Activated CD4-positive, alpha-beta T cell treated with anti-CD3 and anti-CD28 coated beads, Interleukin-2, amount 10 ng/mL, durations not matched to agents 7 days and 5 days (primary cell): ENCODE measurements at regions of chr1 and their contacts with region 1.

Region 1: DNA sequence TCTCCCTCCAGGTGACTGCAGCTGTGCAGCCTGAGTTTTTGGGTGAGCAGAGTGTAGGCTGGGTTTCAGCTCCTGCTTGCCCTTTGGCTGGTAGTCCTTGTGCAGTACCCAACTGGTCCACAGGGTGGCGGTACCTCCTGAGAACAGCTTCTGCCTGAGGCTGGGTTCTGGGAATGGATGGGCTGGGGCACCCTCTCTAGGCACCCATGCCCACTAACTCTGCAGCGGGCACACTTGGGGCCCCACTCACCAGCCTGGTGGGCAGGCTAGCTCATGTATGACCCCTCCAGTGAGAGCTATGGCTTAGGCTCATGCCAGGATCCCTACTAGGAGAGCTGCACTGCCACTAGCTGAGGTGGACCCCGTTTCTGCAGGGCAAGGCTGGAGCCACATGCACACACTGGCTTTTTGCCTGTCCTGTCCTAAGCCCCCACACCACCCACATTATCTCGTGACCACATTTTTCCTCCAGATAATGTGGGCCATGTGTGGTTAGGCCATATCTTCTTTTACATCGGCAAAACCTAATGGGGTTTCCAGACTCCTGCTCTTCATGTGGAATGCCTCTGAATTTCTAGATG is 15.5 kb upstream of the GSTM4 start:
- DNase-seq: peak; percentile 93
- H3K4me3 Mint-ChIP-seq: no peak overlapping the region
- H3K27ac Mint-ChIP-seq: no peak overlapping the region
- H3K4me1 Mint-ChIP-seq: peaks cover 21% of the 10 kb centered on the region
- H3K27me3 Mint-ChIP-seq: no peaks in the 10 kb centered on the region

Region 2: DNA sequence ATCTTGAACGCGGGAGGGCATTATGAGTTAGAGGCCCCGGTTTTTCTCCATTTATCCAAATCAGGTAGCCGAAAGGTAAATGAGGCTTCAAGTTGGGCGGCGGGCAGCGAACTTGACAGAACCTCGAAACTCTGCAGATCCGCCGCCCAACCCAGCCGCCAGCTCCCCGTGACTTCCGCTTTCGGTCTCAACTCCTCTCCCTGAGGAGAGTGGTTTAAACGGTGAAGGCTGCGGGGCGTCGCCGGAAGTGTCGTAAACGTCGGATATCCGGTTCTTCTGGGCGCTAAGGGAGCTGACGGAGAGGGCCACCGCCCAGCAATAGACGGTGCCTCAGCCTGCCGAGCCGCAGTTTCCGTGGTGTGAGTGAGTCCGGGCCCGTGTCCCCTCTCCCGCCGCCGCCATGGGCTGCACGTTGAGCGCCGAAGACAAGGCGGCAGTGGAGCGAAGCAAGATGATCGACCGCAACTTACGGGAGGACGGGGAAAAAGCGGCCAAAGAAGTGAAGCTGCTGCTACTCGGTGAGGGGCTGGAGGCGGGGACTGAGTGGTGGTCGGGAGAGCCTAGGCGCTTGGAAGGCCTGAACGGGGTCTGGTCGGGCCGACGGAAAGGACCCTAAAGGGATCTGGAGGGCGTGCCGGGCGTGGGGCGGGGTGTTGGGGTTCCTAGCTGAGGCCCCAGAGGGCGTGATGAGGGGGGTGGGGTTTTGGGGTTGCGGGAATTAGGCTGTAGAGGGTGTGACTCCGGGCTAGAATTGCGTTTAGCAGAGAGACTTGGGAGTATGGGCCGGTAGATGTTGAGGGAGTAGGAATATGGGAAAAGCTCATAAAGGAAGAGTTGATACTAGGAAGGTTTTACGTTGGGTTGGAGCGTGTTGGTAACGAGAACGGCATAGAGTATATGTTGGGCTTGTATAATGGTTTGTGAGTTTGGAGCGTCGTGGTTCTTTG is 91.8 kb before region 1 on chr1 and contains the start of gene GNAI3:
- CTCF ChIA-PET with region 1: interaction called, 30 read pairs
- POLR2A ChIA-PET with region 1: no interaction called
- DNase-seq: peak; percentile 98
- H3K4me3 Mint-ChIP-seq: peak within 1 kb of the TSS; percentile 96
- H3K27ac Mint-ChIP-seq: peak within 1 kb of the TSS; percentile 98
- H3K4me1 Mint-ChIP-seq: peaks cover 49% of the 10 kb centered on the region
- H3K27me3 Mint-ChIP-seq: no peaks in the 10 kb centered on the region
- total RNA-seq, gene GNAI3: 8.8 to 9.7 TPM

Region 3: DNA sequence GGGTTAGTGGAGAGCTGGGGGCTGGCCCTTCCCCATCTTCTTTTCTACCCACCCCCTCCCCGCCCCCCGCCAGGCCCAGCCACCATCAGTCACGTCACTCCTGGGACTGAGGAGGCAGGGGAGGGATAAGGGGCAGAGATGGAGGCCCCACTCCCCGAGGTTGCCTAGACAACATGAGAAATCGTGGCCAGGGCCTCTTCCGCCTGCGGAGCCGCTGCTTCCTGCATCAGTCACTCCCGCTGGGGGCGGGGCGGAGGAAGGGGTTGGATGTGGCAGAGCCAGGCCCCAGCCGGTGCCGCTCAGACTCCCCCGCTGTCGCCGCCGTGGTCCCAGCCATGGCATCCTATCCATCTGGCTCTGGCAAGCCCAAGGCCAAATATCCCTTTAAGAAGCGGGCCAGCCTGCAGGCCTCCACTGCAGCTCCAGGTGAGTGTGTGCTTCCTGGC is 19.5 kb before region 1 on chr1:
- CTCF ChIA-PET with region 1: interaction called, 67 read pairs
- POLR2A ChIA-PET with region 1: no interaction called
- DNase-seq: peak; percentile 99
- H3K4me3 Mint-ChIP-seq: peak overlapping the region; percentile 84
- H3K27ac Mint-ChIP-seq: peak overlapping the region; percentile 94
- H3K4me1 Mint-ChIP-seq: peaks cover 71% of the 10 kb centered on the region
- H3K27me3 Mint-ChIP-seq: no peaks in the 10 kb centered on the region

Region 4: GRCh38 chr1:109630081-109630897 is 10.1 kb before region 1 on chr1:
- CTCF ChIA-PET with region 1: interaction called, 67 read pairs
- POLR2A ChIA-PET with region 1: no interaction called
- DNase-seq: peak; percentile 41
- H3K4me3 Mint-ChIP-seq: no peak overlapping the region
- H3K27ac Mint-ChIP-seq: no peak overlapping the region
- H3K4me1 Mint-ChIP-seq: peaks cover 19% of the 10 kb centered on the region
- H3K27me3 Mint-ChIP-seq: no peaks in the 10 kb centered on the region

Region 5: DNA sequence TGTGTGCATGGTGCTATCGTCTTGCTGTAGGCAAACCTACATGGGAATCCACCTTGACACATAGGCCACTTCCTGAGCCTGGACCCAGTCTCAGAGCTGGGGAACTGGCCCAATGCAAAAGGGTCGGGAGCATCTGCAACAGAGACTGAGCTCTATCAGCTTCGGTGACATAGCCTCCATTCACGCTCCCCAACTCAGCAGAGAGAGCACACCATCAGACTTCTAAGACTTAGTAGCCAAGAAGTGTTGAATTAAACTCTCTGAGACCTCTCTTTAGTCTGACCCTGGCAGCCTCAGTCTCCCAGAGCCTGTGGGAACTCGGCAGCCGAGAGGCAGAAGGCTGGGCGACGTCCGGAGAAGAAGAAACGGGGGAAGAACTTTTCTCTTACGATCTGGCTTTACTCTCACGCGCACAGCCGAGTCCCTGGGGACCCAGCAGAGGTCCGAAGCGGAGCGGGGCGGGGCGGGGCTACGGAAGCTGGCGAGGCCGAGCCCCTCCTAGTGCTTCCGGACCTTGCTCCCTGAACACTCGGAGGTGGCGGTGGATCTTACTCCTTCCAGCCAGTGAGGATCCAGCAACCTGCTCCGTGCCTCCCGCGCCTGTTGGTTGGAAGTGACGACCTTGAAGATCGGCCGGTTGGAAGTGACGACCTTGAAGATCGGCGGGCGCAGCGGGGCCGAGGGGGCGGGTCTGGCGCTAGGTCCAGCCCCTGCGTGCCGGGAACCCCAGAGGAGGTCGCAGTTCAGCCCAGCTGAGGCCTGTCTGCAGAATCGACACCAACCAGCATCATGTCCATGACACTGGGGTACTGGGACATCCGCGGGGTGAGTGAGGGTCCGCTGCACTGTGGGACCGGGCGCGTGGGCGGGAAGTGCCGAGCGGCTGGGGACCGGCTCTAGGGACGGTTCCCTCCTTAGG is 15.5 kb after region 1 on chr1 and contains the start of gene GSTM4:
- CTCF ChIA-PET with region 1: interaction called, 52 read pairs
- POLR2A ChIA-PET with region 1: no interaction called
- DNase-seq: peak; percentile 76
- H3K4me3 Mint-ChIP-seq: peak within 1 kb of the TSS; percentile 82
- H3K27ac Mint-ChIP-seq: peak within 1 kb of the TSS; percentile 91
- H3K4me1 Mint-ChIP-seq: peaks cover 26% of the 10 kb centered on the region
- H3K27me3 Mint-ChIP-seq: peaks cover 21% of the 10 kb centered on the region
- total RNA-seq, gene GSTM4: 34.3 to 36.3 TPM

Region 6: DNA sequence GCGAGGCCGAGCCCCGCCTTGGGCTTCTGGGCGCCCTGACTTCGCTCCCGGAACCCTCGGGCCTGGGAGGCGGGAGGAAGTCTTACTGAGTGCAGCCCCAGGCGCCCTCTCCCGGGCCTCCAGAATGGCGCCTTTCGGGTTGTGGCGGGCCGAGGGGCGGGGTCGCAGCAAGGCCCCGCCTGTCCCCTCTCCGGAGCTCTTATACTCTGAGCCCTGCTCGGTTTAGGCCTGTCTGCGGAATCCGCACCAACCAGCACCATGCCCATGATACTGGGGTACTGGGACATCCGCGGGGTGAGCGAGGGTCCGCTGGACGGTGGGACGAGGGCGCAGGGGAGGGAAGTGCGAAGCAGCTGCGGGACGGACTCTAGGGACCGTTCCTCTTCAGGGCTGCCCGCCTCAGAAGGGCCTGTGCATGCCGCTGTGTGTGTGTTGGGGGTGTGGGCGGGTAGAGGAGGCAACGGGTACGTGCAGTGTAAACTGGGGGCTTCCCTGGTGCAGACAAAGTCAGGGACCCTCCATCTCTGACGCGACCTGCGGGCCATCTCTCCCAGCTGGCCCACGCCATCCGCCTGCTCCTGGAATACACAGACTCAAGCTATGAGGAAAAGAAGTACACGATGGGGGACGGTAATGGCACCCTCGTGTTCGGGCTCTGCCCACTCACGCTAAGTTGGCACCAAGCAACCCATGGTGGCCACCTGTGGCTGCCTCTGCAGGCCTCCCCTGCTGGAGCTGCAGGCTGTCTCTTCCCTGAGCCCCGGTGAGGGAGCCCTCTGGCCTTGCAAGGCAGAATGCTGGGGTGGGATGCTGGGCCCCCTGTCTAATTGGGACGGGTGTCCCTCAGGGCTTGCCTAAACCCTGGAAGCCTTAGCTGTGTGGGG is 47.5 kb after region 1 on chr1 and contains the start of gene GSTM1:
- CTCF ChIA-PET with region 1: no interaction called
- POLR2A ChIA-PET with region 1: no interaction called
- DNase-seq: peak; percentile 89
- H3K4me3 Mint-ChIP-seq: peak within 1 kb of the TSS; percentile 82
- H3K27ac Mint-ChIP-seq: peak within 1 kb of the TSS; percentile 91
- H3K4me1 Mint-ChIP-seq: peaks cover 22% of the 10 kb centered on the region
- H3K27me3 Mint-ChIP-seq: no peaks in the 10 kb centered on the region
- total RNA-seq, gene GSTM1: 68.4 to 77.2 TPM

Region 7: DNA sequence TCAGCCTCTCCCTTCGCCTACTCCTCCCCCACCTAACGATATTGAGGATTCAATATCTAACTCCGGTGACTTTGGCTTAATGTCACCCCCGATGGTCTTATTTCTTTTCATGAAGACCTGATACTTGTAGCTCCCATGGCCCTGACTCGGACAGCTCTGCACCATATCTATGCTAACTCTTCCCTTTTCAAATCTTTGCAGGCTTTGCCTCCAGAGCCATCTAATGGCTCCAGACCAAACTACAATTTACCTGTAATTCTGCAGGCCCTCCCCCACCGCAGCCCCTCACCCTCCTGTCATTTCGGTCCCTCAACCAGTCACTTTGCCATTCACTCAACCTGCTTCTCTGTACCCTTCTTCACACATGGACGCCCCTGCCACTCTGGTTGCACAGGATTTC is 63.8 kb after region 1 on chr1:
- CTCF ChIA-PET with region 1: no interaction called
- POLR2A ChIA-PET with region 1: no interaction called
- DNase-seq: no peak
- H3K4me3 Mint-ChIP-seq: no peak overlapping the region
- H3K27ac Mint-ChIP-seq: no peak overlapping the region
- H3K4me1 Mint-ChIP-seq: no peaks in the 10 kb centered on the region
- H3K27me3 Mint-ChIP-seq: no peaks in the 10 kb centered on the region

Region 8: DNA sequence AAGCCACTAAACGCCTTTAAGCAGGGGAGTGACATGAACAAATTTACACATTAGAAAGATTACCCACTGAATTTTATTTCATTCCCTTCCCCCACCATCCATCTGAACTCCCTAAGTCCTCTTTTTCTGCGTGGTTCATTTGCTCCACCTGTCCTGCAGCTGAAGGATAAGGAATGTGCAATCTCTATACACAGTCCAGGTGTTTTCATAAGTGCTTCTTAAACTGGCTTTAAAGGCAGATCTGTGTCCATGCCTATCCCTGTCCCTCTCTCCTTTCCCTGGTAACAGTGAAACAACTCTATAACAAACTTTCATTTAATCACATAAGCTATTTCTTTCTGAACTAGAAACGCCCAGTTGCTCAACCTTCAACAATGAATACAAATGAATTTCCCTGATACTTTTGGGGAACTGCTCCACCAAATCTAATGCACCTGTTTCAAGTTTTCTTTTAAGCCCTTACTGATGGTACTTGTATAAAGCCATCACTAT is 92.1 kb after region 1 on chr1:
- CTCF ChIA-PET with region 1: no interaction called
- POLR2A ChIA-PET with region 1: no interaction called
- DNase-seq: no peak
- H3K4me3 Mint-ChIP-seq: no peak overlapping the region
- H3K27ac Mint-ChIP-seq: no peak overlapping the region
- H3K4me1 Mint-ChIP-seq: no peaks in the 10 kb centered on the region
- H3K27me3 Mint-ChIP-seq: no peaks in the 10 kb centered on the region